ENCODE measurements at regions of chr7 and their contacts with region 1.

Region 1: DNA sequence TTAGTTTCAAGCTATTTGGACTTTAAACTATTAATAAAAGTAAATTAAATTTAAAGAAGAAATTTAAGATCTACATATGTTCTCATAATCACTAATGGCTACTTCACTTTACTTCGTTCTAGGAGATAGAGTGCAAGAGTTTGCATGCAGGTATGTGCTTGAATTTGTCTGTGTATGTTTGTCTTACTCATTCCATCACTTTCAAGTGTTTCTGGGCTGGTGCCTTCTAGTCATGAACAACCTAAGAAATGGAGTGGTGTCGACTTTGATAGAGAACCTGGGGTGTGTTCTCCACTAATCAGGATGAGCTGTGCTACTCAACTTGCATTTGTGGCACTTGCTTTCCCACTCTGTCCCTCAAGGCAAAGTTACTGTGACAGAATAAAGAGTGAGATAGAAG is 169.9 kb downstream of the KCND2 start:
- DNase-seq: no peak
- ATAC-seq: no peak
- H3K4me3 ChIP-seq: no peak overlapping the region
- H3K27ac ChIP-seq: no peak overlapping the region
- H3K4me1 ChIP-seq: no peaks in the 10 kb centered on the region
- H3K27me3 ChIP-seq: no peaks in the 10 kb centered on the region
- CTCF ChIP-seq: no peak
- POLR2A ChIP-seq: no peak

Region 2: DNA sequence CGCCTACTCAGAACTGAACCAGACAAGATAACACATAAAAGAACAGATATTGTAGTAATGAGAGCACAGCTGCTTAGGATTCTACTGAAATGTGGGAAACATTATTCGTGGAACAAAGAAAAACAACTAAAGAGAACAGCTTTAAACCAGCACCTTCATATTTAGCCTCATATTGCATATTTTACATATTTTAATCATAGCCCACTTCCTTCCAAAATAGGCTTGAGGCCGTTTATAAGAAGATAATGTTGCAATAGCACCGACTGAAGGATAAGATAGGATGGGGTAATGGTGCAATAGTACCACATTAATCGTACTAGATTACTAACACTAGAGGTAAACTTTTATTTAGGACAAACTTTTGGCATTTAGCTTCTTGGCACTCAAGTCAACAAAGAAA is 98.6 kb before region 1 on chr7:
- in situ Hi-C with region 1: no loop called
- intact Hi-C with region 1: no loop called
- DNase-seq: no peak
- ATAC-seq: no peak
- H3K4me3 ChIP-seq: no peak overlapping the region
- H3K27ac ChIP-seq: no peak overlapping the region
- H3K4me1 ChIP-seq: no peaks in the 10 kb centered on the region
- H3K27me3 ChIP-seq: no peaks in the 10 kb centered on the region
- CTCF ChIP-seq: no peak
- POLR2A ChIP-seq: no peak

Region 3: GRCh38 chr7:120467676-120468075 is 24.8 kb after region 1 on chr7:
- in situ Hi-C with region 1: no loop called
- intact Hi-C with region 1: loop called (anchors 2 kb)
- DNase-seq: no peak
- ATAC-seq: no peak
- H3K4me3 ChIP-seq: no peak overlapping the region
- H3K27ac ChIP-seq: no peak overlapping the region
- H3K4me1 ChIP-seq: no peaks in the 10 kb centered on the region
- H3K27me3 ChIP-seq: no peaks in the 10 kb centered on the region
- CTCF ChIP-seq: no peak
- POLR2A ChIP-seq: no peak

Measured in gastrocnemius medialis (tissue), 4 donors.